HCT116 (cell line): ENCODE measurements at regions of chr1 and their contacts with region 1.

Region 1: GRCh38 chr1:173937062-173937461 is 19.9 kb upstream of the SERPINC1 start:
- DNase-seq: no peak
- ATAC-seq: no peak
- H3K4me3 ChIP-seq: no peak overlapping the region
- H3K27ac ChIP-seq: no peak overlapping the region
- H3K4me1 ChIP-seq: no peaks in the 10 kb centered on the region
- H3K27me3 ChIP-seq: no peaks in the 10 kb centered on the region
- CTCF ChIP-seq: no peak
- POLR2A ChIP-seq: no peak
- RAD21 ChIP-seq: no peak

Region 2: DNA sequence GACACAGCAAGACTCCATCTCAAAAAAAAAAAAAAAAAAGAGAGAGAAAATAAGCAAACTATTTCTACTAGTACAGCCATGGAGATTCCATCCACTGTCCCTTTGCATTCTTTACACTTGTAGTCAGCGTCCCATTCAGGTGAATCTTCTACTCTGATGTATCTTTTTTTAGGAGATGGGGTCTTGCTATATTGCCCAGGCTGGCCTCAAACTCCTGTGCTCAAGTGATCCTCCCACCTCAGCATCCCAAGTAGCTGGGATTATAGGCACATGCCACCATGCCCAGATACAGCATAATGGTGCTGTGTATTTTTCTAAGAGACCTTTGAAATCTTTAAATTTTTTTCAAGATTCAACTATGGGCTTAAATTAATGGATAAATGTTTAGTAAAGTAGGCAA is 104.3 kb before region 1 on chr1:
- CTCF ChIA-PET with region 1: no interaction called
- POLR2A ChIA-PET with region 1: no interaction called
- RAD21 ChIA-PET with region 1: no interaction called
- intact Hi-C with region 1: no loop called
- DNase-seq: no peak
- ATAC-seq: no peak
- H3K4me3 ChIP-seq: no peak overlapping the region
- H3K27ac ChIP-seq: no peak overlapping the region
- H3K4me1 ChIP-seq: no peaks in the 10 kb centered on the region
- H3K27me3 ChIP-seq: no peaks in the 10 kb centered on the region
- CTCF ChIP-seq: no peak
- POLR2A ChIP-seq: no peak
- RAD21 ChIP-seq: no peak

Region 3: GRCh38 chr1:173893611-173894010 is 43.5 kb before region 1 on chr1:
- CTCF ChIA-PET with region 1: no interaction called
- POLR2A ChIA-PET with region 1: no interaction called
- RAD21 ChIA-PET with region 1: no interaction called
- intact Hi-C with region 1: loop called (anchors 5 kb)
- DNase-seq: no peak
- ATAC-seq: no peak
- H3K4me3 ChIP-seq: no peak overlapping the region
- H3K27ac ChIP-seq: no peak overlapping the region
- H3K4me1 ChIP-seq: no peaks in the 10 kb centered on the region
- H3K27me3 ChIP-seq: no peaks in the 10 kb centered on the region
- CTCF ChIP-seq: no peak
- POLR2A ChIP-seq: no peak
- RAD21 ChIP-seq: no peak

Region 4: GRCh38 chr1:173986951-173987350 is 49.9 kb after region 1 on chr1:
- CTCF ChIA-PET with region 1: no interaction called
- POLR2A ChIA-PET with region 1: no interaction called
- RAD21 ChIA-PET with region 1: no interaction called
- intact Hi-C with region 1: loop called (anchors 5 kb)
- DNase-seq: no peak
- ATAC-seq: no peak
- H3K4me3 ChIP-seq: no peak overlapping the region
- H3K27ac ChIP-seq: no peak overlapping the region
- H3K4me1 ChIP-seq: no peaks in the 10 kb centered on the region
- H3K27me3 ChIP-seq: no peaks in the 10 kb centered on the region
- CTCF ChIP-seq: no peak
- POLR2A ChIP-seq: no peak
- RAD21 ChIP-seq: no peak